Gastrocnemius medialis (tissue), 4 donors: ENCODE measurements at regions of chr7 and their contacts with region 1.

Region 1: GRCh38 chr7:100132697-100133151 is 6.0 kb downstream of the MBLAC1 start:
- DNase-seq: no peak
- ATAC-seq: peak in 1 of 2 donors; percentile 53
- H3K4me3 ChIP-seq: no peak overlapping the region
- H3K27ac ChIP-seq: no peak overlapping the region
- H3K4me1 ChIP-seq: peaks cover 0 to 7% of the 10 kb centered on the region in 2 donors
- H3K27me3 ChIP-seq: no peaks in the 10 kb centered on the region
- CTCF ChIP-seq: peak; percentile 42 to 66 (median 57)
- POLR2A ChIP-seq: no peak

Region 2: DNA sequence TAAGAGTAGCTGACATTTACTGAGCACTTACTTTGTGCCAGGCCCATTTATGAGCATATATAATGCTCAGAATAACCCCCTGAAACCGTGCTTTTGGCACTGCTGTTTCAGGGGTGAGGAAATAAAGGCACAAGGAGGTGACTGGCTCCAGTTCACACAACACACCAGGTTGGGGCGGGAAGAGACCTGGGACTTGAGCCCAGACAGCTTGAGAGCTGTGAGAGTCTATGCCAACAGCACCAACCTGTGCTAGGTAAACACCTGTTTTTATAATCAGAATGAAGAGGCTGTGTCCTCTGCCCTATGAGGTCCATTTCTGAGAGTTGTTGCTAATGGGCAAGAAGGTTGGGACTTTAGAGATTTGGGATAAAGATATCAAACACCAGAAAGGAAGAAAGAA is 148.1 kb before region 1 on chr7:
- in situ Hi-C with region 1: loop called in 1 of 4 experiments (anchors 10 kb)
- intact Hi-C with region 1: no loop called
- DNase-seq: no peak
- ATAC-seq: no peak
- H3K4me3 ChIP-seq: no peak overlapping the region
- H3K27ac ChIP-seq: no peak overlapping the region
- H3K4me1 ChIP-seq: no peaks in the 10 kb centered on the region
- H3K27me3 ChIP-seq: no peaks in the 10 kb centered on the region
- CTCF ChIP-seq: no peak
- POLR2A ChIP-seq: no peak